IMR-90 (cell line): ENCODE measurements at regions of chr5 and their contacts with region 1.

Region 1: DNA sequence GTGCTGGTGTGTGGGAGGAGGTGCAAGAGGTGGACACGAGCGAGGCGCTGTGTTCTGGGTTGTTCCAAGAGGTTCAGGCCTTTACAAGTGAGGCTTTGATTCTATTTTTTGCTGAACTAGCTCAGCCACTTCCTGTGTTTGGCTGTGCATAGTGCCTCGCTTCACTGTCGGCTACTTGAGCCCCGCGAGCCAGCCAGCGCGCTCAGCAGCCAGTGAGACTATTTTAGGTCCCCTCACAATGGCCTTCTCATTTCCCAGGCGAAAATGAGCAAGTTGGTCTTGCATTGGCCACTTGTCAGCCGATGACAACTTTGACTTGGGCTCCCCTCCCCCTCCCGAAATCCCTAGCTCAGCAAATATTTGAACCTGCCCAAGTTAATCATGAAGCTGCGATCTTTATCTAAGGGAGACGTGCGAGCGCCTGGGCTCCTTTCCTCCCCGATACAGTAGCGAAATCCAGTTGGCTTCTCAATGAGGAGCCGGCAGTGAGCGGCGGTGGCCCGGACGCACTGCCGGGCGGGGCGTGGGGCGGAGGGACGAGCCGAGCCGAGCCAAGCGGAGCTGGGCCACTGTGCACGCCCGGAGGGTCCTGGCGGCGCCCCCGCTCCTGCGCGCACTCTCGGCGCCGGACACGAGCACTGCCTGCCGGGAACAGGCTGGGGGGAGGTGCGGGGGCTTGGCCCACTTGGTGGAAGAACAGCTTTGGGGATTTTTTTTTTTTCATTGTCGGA is 72.6 kb downstream of the PIK3R1 start:
- DNase-seq: peak; percentile 37
- ATAC-seq: peak; percentile 90
- H3K4me3 ChIP-seq: peak overlapping the region; percentile 48
- H3K27ac ChIP-seq: peak overlapping the region; percentile 23
- H3K4me1 ChIP-seq: peaks cover 11% of the 10 kb centered on the region
- H3K27me3 ChIP-seq: no peaks in the 10 kb centered on the region
- CTCF ChIP-seq: no peak
- POLR2A ChIP-seq: no peak
- RAD21 ChIP-seq: no peak; the same call in 1 of the 2 replicates

Region 2: DNA sequence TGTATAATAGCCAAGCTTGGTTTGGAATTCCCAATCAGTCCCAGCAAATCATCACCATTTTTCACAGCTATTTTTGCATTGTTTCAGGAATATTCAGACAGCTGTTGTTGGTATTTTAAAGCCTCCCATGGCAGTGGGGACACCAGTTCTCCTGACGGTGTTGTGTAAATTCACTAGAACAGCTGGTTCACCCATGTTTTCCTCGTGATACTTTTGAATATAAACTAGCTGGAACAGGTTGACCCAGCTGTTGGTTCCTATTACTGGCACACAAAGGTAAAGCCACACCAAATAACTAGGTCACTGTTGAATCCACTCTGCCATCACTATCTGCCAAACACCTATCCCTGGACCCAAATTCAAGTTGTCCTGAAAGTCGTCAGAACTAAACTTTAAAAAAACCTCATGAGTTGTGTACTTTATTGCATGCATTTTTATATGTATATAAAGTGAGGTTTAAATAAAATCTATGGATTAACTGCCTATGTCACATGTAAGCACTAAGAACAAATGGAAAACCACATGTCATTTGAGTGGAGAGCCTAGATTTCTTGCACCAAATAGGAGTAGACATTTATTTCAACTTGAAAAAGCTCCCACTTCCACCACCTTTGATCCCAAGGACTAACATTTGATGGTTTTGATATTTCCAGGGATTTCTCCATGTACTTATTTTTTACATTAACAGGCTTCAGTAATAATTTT is 194.5 kb before region 1 on chr5:
- CTCF ChIA-PET with region 1: no interaction called
- POLR2A ChIA-PET with region 1: no interaction called
- dilution Hi-C with region 1: no loop called
- in situ Hi-C with region 1: no loop called
- intact Hi-C with region 1: no loop called
- DNase-seq: no peak
- ATAC-seq: no peak
- H3K4me3 ChIP-seq: no peak overlapping the region
- H3K27ac ChIP-seq: no peak overlapping the region
- H3K4me1 ChIP-seq: no peaks in the 10 kb centered on the region
- H3K27me3 ChIP-seq: no peaks in the 10 kb centered on the region
- CTCF ChIP-seq: no peak
- POLR2A ChIP-seq: no peak
- RAD21 ChIP-seq: no peak

Region 3: GRCh38 chr5:68239487-68239886 is 48.7 kb before region 1 on chr5:
- CTCF ChIA-PET with region 1: no interaction called
- POLR2A ChIA-PET with region 1: no interaction called
- dilution Hi-C with region 1: no loop called
- in situ Hi-C with region 1: no loop called
- intact Hi-C with region 1: no loop called
- DNase-seq: peak; percentile 90
- ATAC-seq: peak; percentile 79
- H3K4me3 ChIP-seq: no peak overlapping the region
- H3K27ac ChIP-seq: no peak overlapping the region
- H3K4me1 ChIP-seq: peaks cover 5% of the 10 kb centered on the region
- H3K27me3 ChIP-seq: no peaks in the 10 kb centered on the region
- CTCF ChIP-seq: no peak
- POLR2A ChIP-seq: no peak
- RAD21 ChIP-seq: peak; percentile 14

Region 4: DNA sequence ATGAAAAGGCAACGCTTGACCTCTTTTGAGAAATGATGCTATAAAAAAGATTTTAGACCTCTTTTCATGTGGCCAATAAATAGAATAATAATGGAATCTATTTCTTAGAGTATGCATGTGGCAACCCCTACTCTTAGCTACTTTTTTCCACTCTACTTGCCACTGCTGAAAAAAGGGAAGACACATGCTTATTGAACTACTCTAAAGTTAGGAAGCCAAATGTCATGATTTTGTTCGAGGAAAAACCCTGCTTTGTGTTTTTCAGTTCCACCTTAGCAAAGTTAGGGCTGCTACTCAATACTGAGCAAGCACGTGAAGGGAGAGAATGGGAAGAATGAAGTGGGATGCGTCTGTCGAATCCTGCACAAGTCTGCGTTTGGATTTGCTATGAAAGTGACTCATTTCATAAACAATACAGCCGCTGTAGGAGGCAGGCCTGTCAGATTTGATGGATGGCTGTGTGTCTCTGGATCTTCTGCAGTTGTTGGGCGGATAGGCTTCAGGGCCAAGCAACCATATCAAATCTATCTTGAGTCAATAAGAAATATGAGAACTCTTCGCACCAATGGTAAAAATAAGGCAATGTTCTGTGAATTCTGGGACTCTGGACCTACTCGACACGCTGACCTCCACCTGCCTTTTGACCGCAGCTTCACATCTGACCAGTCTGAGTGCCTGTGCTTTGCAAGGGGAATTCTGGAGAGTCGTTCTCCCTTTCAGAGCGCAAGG is 261.0 kb after region 1 on chr5:
- CTCF ChIA-PET with region 1: no interaction called
- POLR2A ChIA-PET with region 1: no interaction called
- dilution Hi-C with region 1: no loop called
- in situ Hi-C with region 1: no loop called
- intact Hi-C with region 1: loop called (anchors 2 kb)
- DNase-seq: peak; percentile 92
- ATAC-seq: peak; percentile 91
- H3K4me3 ChIP-seq: no peak overlapping the region
- H3K27ac ChIP-seq: peak overlapping the region; percentile 36; the same call in 1 of the 2 replicates
- H3K4me1 ChIP-seq: peaks cover 4% of the 10 kb centered on the region
- H3K27me3 ChIP-seq: no peaks in the 10 kb centered on the region
- CTCF ChIP-seq: no peak
- POLR2A ChIP-seq: no peak
- RAD21 ChIP-seq: no peak

Region 5: DNA sequence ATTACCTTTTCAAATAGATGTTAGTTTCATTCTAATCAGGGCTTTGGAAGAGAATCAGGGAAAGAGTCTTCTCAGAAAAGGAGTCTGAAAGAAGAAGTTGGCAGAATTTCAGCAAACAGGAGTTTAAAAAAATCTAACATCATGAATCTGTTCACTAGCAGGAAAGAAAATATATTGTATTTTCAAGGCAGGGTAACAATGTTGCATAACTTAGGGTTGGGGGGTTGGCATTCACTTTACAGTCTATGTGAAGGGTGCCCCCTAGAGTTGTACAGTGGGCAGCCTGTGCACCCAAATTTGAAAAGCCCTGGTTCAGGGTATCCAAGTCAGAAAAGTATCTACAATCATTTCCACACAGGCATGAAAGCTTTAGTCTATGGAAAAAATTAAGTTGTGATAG is 457.3 kb after region 1 on chr5:
- CTCF ChIA-PET with region 1: no interaction called
- POLR2A ChIA-PET with region 1: no interaction called
- dilution Hi-C with region 1: no loop called
- in situ Hi-C with region 1: no loop called
- intact Hi-C with region 1: loop called (anchors 1 kb)
- DNase-seq: peak; percentile 2
- ATAC-seq: no peak
- H3K4me3 ChIP-seq: no peak overlapping the region
- H3K27ac ChIP-seq: no peak overlapping the region
- H3K4me1 ChIP-seq: no peaks in the 10 kb centered on the region
- H3K27me3 ChIP-seq: no peaks in the 10 kb centered on the region; the same call in 1 of the 2 replicates
- CTCF ChIP-seq: peak; percentile 30
- POLR2A ChIP-seq: no peak
- RAD21 ChIP-seq: peak; percentile 35

Region 6: DNA sequence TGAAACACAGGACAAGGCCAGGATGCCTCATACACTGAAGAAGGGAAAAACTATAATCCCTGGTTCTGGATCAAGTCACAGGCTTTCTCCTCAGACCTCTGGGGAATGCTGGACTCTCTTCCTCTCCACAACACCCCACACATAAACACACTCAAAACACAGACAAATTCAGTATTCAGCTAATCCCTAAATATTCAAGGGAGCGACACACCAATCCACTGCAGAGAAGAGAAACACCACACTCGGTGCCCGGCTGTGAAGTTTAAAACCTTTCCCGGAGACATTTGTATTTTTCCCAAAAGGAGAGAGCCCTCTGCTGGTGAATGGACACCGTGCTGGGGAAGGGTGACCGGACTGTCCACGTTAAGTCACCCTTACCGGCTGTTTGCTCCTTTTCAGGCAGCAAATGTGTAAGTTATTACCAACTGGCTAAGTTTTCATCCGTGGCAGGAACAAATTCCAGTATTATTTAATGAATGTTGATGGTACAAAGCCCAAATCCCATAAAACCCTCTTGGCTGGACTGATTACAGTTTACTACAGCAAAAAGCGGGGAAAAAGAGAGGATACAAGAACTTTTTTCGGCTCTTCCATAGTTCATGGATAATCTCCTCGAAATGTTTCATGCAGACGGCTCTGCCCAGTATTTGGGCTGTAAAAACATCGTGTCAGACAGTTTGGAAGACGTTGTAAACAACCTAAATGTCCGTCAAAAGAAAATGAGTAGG is 674.8 kb after region 1 on chr5:
- CTCF ChIA-PET with region 1: interaction called, 5 read pairs
- POLR2A ChIA-PET with region 1: no interaction called
- dilution Hi-C with region 1: no loop called
- in situ Hi-C with region 1: loop called (anchors 5 kb)
- intact Hi-C with region 1: loop called (anchors 1 kb)
- DNase-seq: peak; percentile 52
- ATAC-seq: peak; percentile 99
- H3K4me3 ChIP-seq: no peak overlapping the region
- H3K27ac ChIP-seq: no peak overlapping the region
- H3K4me1 ChIP-seq: no peaks in the 10 kb centered on the region
- H3K27me3 ChIP-seq: peaks cover 2% of the 10 kb centered on the region
- CTCF ChIP-seq: peak; percentile 71
- POLR2A ChIP-seq: no peak
- RAD21 ChIP-seq: peak; percentile 68